ENCODE measurements at regions of chr3 and their contacts with region 1.

Region 1: DNA sequence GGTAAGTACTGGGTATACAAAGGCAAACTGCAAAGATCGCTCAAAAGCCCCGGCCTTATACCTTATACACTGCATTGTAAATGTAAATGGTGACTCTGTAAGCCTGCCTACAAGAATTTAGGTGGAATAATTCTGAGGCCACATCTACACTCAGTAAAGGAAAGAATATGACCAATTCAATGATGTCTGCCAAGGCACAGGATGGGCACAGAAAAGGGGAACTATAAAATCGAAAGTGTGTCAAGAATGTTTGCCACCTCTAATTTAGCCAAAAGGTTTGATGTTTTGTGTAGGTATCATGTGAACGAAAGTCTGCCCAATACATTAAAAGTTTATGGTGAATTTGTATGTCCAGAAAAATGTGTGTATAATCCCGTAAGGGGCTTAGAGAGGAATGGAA is 96.1 kb downstream of the FOXP1 start:
- DNase-seq: peak in 2 of 14 experiments; percentile 43 to 65
- ATAC-seq: no peak
- H3K4me3 ChIP-seq: peak overlapping the region; percentile 28
- H3K4me3 Mint-ChIP-seq: peak overlapping the region; percentile 84
- H3K27ac ChIP-seq: peak overlapping the region; percentile 78 to 88
- H3K27ac Mint-ChIP-seq: peak overlapping the region; percentile 95
- H3K4me1 ChIP-seq: peaks cover 72% of the 10 kb centered on the region
- H3K4me1 Mint-ChIP-seq: peaks cover 94% of the 10 kb centered on the region
- H3K27me3 ChIP-seq: no peaks in the 10 kb centered on the region
- H3K27me3 Mint-ChIP-seq: no peaks in the 10 kb centered on the region
- CTCF ChIP-seq: no peak

Region 2: DNA sequence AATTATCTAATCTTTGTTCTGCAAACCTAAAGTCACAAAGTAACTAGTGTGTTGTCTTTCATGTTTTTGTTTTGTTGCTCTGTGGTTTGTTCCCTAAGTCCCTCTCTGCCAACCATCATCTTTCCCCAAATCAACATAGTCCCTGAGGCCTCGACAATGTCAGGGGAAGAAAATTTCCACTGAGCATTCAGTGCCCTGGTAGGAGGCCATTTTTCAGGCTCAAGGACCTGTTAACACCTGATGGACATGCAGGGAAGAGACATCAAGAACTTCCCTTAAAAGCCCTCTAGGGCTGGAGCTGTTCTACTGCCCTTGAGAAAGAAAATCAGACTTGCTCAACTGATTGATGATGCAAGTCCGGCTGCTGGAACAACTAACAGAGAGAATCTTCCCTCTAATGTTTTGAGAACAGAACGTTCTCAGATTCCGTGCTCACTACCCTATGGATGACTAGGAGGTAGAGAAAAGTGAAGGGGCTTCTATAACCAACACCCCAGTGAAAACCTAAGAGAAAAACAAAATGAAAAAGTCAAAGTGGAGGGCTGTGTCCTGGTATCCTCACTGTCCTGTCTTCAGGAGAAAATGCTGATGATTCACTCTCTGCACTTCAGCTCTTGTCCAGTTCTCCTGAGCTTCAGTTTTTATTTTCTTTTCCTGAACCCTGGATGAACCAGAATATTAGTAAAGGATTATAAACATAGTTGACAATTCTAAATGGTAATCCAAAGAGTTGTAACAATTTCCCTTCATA is 277.0 kb before region 1 on chr3:
- CTCF ChIA-PET with region 1: no interaction called
- POLR2A ChIA-PET with region 1: no interaction called
- intact Hi-C with region 1: no loop called
- DNase-seq: no peak
- ATAC-seq: no peak
- H3K4me3 ChIP-seq: no peak overlapping the region
- H3K4me3 Mint-ChIP-seq: peak overlapping the region; percentile 9
- H3K27ac ChIP-seq: peak overlapping the region in 1 of 2 donors; percentile 21
- H3K27ac Mint-ChIP-seq: peak overlapping the region; percentile 74
- H3K4me1 ChIP-seq: peaks cover 5% of the 10 kb centered on the region
- H3K4me1 Mint-ChIP-seq: peaks cover 90% of the 10 kb centered on the region
- H3K27me3 ChIP-seq: no peaks in the 10 kb centered on the region
- H3K27me3 Mint-ChIP-seq: no peaks in the 10 kb centered on the region
- CTCF ChIP-seq: no peak

Region 3: DNA sequence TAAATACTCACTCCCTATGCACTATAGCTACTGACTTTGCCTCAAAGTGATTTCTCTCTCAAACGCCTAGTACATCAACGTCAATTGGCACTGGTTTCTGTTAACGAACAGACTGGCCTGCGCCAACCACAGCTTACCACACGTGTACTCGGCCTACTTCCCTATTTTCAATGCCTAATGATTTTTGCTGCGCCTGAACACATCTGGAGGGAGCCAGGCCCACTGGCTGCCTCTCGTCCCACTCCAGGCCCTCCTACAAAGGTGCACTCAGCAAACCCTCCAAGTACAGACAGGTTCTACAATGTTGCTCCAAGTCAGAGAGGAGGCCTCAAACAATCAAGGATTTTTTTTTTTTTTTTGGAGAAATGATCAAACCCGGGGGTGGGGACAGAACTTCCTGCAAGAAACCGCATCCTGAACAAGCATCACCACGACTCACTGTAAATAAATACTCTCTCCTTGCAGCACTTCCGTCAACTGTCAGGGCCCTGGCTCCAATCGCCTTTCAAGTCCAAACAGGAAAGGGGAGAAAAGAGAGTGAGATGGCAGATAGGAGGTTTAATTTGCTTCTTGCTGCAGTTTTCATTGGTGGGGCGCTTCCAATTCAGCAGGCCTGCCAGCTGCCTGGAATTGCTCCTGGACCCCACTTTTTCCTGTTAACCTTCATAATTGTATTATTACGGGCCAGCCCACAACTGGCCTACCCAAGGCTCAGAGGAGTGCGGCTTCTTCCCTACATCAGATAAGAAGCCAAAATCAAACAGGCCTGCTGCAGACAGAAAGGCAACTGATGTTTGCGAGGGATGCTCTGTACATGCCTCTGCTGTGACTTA is 43.2 kb before region 1 on chr3:
- CTCF ChIA-PET with region 1: interaction called, 3 read pairs
- POLR2A ChIA-PET with region 1: interaction called, 8 read pairs
- intact Hi-C with region 1: loop called (anchors 2 to 5 kb)
- DNase-seq: peak; percentile 53 to 95 (median 68)
- ATAC-seq: peak; percentile 78
- H3K4me3 ChIP-seq: no peak overlapping the region
- H3K4me3 Mint-ChIP-seq: peak overlapping the region; percentile 79
- H3K27ac ChIP-seq: peak overlapping the region; percentile 67 to 82
- H3K27ac Mint-ChIP-seq: peak overlapping the region; percentile 94
- H3K4me1 ChIP-seq: peaks cover 97% of the 10 kb centered on the region
- H3K4me1 Mint-ChIP-seq: peaks cover 97% of the 10 kb centered on the region
- H3K27me3 ChIP-seq: no peaks in the 10 kb centered on the region
- H3K27me3 Mint-ChIP-seq: no peaks in the 10 kb centered on the region
- CTCF ChIP-seq: no peak

Region 4: GRCh38 chr3:71451060-71451459 is 36.4 kb before region 1 on chr3:
- CTCF ChIA-PET with region 1: interaction called, 10 read pairs
- POLR2A ChIA-PET with region 1: interaction called, 37 read pairs
- intact Hi-C with region 1: loop called (anchors 2 to 5 kb)
- DNase-seq: peak in 2 of 14 experiments; percentile 42 to 49
- ATAC-seq: peak; percentile 28
- H3K4me3 ChIP-seq: no peak overlapping the region
- H3K4me3 Mint-ChIP-seq: peak overlapping the region; percentile 65
- H3K27ac ChIP-seq: peak overlapping the region; percentile 47 to 78
- H3K27ac Mint-ChIP-seq: peak overlapping the region; percentile 94
- H3K4me1 ChIP-seq: peaks cover 82% of the 10 kb centered on the region
- H3K4me1 Mint-ChIP-seq: peaks cover 100% of the 10 kb centered on the region
- H3K27me3 ChIP-seq: no peaks in the 10 kb centered on the region
- H3K27me3 Mint-ChIP-seq: no peaks in the 10 kb centered on the region
- CTCF ChIP-seq: no peak